ENCODE measurements at regions of chr15 and their contacts with region 1.

Region 1: DNA sequence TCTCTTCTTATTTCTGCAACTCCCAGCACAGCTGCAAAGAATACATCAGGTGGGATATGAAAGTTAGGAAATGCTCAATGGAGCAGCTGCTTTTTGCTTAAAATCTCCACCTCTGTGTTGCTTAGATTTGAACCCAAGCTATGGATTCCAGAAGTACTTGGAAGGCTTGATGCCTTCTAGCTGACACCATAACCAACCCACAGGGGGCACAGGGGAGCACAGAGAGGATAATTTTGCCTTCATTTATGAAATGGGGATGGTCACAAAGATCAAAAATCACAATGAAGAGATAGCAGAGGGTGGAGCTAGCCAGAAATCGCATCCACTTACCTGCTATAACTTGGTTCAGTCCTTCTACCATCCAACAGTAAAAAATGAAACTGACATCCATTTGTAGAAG is 75.7 kb downstream of the DUT start:
- DNase-seq: no peak
- ATAC-seq: no peak
- H3K4me3 ChIP-seq: no peak overlapping the region
- H3K27ac ChIP-seq: no peak overlapping the region
- H3K4me1 ChIP-seq: peaks cover 6% of the 10 kb centered on the region
- H3K27me3 ChIP-seq: no peaks in the 10 kb centered on the region
- CTCF ChIP-seq: peak in 2 of 3 experiments; percentile 2 to 38; a peak in 2 of 6 replicates
- EP300 ChIP-seq: no peak
- POLR2A ChIP-seq: no peak
- RAD21 ChIP-seq: no peak

Region 2: DNA sequence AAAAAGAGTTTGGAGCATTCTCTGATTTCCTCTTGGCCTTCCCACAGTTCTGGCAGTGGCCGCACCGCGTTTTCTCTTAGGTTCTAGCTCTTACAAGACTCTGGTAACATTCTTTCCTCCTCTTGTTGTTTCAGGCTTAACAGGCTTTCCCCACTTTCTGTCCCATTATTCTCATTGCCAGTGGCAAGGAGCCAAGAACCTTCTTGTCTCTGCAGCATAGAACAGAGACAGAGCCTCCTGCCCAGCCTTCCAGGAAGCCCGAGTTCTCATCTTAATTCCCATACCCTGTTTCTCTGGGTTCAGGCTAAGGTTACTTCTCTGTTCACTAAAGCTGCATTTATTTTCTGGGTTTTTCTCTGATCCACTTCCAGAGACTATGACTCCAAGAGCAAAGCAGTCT is 14.6 kb before region 1 on chr15:
- CTCF ChIA-PET with region 1: interaction called, 10 read pairs
- POLR2A ChIA-PET with region 1: no interaction called
- RAD21 ChIA-PET with region 1: interaction called, 3 read pairs
- SMC1A ChIA-PET with region 1: interaction called, 5 read pairs
- in situ Hi-C with region 1: no loop called
- intact Hi-C with region 1: no loop called
- DNase-seq: no peak
- ATAC-seq: no peak
- H3K4me3 ChIP-seq: no peak overlapping the region
- H3K27ac ChIP-seq: no peak overlapping the region
- H3K4me1 ChIP-seq: no peaks in the 10 kb centered on the region
- H3K27me3 ChIP-seq: no peaks in the 10 kb centered on the region
- CTCF ChIP-seq: no peak
- EP300 ChIP-seq: no peak
- POLR2A ChIP-seq: no peak
- RAD21 ChIP-seq: no peak

Region 3: DNA sequence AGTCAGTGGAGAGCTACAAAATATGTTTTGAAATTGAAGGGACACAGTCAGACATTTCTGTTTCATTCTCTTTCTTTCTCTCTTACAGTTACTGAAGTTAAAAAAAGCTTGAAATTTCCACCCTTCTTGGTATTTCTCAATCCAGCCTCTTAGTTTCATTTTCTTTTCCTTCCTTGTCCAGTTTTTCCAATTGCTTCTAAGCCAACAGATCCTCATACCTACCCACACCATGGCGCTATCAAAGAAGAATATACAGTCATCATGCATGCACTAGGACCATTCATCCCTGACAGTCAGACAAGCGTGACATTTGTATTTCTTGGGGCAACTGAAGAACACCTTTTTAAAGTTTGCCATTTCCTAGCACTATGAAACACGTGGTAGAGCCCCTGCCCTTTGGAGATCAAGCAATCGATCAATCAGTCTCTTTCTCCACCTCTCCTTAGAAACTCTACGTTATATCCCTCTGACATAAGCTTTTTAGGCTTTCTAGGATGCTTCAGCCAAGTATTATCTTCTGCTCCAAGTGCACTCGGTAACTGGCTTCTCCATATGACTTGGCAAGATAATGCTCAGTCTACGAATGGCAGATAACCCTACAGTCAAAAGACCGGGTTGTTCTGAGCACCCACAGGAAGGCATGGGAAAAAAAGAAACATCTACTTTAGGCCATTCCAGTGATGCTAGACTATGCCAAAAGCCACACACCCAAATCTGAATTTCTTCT is 173.2 kb after region 1 on chr15:
- CTCF ChIA-PET with region 1: no interaction called
- POLR2A ChIA-PET with region 1: no interaction called
- RAD21 ChIA-PET with region 1: no interaction called
- SMC1A ChIA-PET with region 1: no interaction called
- in situ Hi-C with region 1: no loop called
- intact Hi-C with region 1: no loop called
- DNase-seq: no peak
- ATAC-seq: no peak
- H3K4me3 ChIP-seq: no peak overlapping the region
- H3K27ac ChIP-seq: no peak overlapping the region
- H3K4me1 ChIP-seq: no peaks in the 10 kb centered on the region
- H3K27me3 ChIP-seq: no peaks in the 10 kb centered on the region
- CTCF ChIP-seq: no peak
- EP300 ChIP-seq: no peak
- POLR2A ChIP-seq: no peak
- RAD21 ChIP-seq: no peak

Measured in GM12878 (cell line).